ENCODE measurements at regions of chr18 and their contacts with region 1.

Region 1: DNA sequence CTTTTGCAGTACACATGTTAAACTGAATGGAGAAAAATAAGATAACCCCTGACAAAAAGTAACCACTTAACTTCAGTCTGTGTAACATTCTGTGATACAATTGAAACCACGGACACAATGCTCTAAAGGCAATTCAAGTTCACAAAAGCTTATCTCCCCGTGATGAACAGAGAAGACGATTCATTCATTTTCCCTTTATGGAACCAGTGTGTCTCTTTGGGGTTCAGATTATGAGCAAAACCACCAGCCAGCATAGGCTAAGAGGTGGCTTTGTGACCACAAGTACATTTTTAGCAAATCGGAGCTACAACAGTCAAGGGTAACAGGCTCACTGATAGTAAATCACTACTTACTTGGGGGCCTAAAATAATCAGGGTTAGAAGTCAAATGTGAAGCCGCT is 120.6 kb upstream of the SMAD7 start:
- DNase-seq: no peak
- H3K4me3 Mint-ChIP-seq: no peak overlapping the region
- H3K27ac Mint-ChIP-seq: peak overlapping the region; percentile 15
- H3K4me1 Mint-ChIP-seq: peaks cover 29% of the 10 kb centered on the region
- H3K27me3 Mint-ChIP-seq: no peaks in the 10 kb centered on the region

Region 2: DNA sequence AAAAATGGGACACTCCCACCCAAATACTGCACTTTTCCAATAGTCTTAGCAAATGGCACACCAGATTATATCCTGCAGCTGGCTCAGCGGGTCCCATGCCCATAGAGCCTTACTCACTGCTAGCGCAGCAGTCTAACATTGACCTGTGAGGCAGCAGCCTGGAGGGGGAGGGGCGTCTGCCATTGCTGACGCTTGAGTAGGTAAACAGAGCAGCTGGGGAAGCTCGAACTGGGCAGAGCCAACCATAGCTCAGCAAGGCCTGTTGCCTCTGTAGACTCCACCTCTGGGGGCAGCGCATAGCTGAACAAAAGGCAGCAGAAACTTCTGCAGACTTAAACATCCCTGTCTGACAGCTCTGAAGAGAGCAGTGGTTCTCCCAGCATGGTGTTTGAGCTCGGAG is 422.1 kb before region 1 on chr18:
- intact Hi-C with region 1: no loop called
- DNase-seq: no peak
- H3K4me3 Mint-ChIP-seq: no peak overlapping the region
- H3K27ac Mint-ChIP-seq: no peak overlapping the region
- H3K4me1 Mint-ChIP-seq: no peaks in the 10 kb centered on the region
- H3K27me3 Mint-ChIP-seq: peaks cover 9% of the 10 kb centered on the region

Region 3: GRCh38 chr18:49169037-49169521 is 97.8 kb after region 1 on chr18:
- intact Hi-C with region 1: loop called (anchors 1 kb)
- DNase-seq: no peak
- H3K4me3 Mint-ChIP-seq: no peak overlapping the region
- H3K27ac Mint-ChIP-seq: no peak overlapping the region
- H3K4me1 Mint-ChIP-seq: peaks cover 57% of the 10 kb centered on the region
- H3K27me3 Mint-ChIP-seq: no peaks in the 10 kb centered on the region